Activated CD4-positive, alpha-beta T cell treated with anti-CD3 and anti-CD28 coated beads for 36 hours (primary cell): ENCODE measurements at regions of chr21 and their contacts with region 1.

Region 1: DNA sequence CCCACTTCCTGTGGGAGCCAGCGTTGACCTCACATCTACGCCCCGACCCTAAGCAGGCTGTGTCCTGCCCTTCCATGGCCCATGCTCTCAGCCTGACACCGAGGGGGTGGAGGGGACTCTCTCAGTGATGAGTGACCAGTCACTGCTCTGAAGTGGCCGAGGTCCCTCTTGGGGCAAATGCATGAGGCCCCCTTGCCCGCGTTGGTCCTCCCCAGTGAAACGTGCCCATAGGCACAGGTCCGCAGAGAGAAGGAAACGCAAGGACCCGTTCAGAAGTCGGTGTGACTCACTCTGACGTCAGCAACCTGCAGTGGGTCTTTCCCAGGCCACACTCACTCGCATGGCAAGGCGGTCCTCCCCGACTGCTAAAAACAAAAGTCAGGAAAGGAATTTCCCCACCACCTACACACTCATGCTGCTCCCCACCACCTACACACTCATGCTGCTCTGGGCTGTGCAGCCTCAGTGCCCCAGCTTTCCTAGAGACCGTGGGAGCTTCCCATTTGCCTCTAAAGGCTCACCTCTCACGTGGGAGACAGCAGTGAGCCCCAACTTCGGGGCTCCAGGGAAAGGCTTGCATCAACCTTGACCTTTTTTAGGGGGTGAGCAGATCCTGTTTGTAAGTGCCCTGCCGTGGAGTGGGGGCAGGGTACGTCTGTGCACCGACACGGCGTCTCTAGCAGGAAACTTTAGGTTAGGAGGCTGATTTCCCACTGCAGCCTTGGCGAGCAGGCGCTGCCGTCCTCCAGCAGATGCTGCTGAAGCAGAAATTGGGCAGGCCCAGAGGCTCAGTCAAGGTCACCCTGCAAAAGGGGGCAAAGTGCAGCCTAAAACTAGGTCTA is 11.4 kb downstream of the UBASH3A start:
- DNase-seq: peak; percentile 99
- ATAC-seq: peak; percentile 71
- H3K4me3 Mint-ChIP-seq: peak overlapping the region; percentile 68
- H3K27ac Mint-ChIP-seq: no peak overlapping the region
- H3K4me1 Mint-ChIP-seq: peaks cover 27% of the 10 kb centered on the region
- H3K27me3 Mint-ChIP-seq: no peaks in the 10 kb centered on the region

Region 2: GRCh38 chr21:42002421-42002958 is 412.7 kb before region 1 on chr21:
- CTCF ChIA-PET with region 1: no interaction called
- POLR2A ChIA-PET with region 1: no interaction called
- intact Hi-C with region 1: loop called (anchors 5 kb)
- DNase-seq: peak; percentile 90
- ATAC-seq: peak; percentile 92
- H3K4me3 Mint-ChIP-seq: peak overlapping the region; percentile 52
- H3K27ac Mint-ChIP-seq: peak overlapping the region; percentile 93
- H3K4me1 Mint-ChIP-seq: peaks cover 61% of the 10 kb centered on the region
- H3K27me3 Mint-ChIP-seq: no peaks in the 10 kb centered on the region

Region 3: DNA sequence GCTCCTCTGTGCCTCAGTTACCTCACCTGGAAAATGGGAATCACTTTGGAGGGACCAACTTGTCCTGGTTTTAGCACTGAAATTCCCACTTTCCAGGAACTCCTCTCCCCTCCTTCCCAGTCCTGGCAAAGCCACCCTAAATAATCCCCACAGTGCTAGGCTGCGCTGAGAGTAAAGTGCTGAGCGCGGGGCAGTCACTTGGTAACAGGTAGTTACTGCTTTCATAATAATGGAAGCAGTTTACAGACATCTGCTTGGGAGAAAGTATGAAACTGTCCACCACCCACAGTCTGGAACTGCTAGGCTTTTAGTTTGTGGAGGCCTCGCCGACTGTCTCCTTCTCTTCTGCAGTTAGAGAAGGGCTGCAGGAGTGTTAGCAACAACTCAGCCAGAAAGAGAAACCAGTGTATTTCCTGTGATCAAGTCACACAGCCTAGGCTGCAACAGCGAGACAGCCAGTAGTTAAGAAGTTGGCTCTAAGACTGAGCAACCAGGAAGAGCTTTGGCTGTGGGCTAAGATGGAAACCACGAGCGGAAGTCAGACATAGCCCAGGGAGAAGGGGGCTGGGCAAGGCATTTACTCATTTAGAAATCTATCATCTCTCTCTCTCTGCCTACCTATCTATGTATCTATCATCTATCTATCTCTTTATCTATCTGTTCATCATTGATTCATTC is 227.0 kb before region 1 on chr21:
- CTCF ChIA-PET with region 1: no interaction called
- POLR2A ChIA-PET with region 1: no interaction called
- intact Hi-C with region 1: loop called in 1 of 2 experiments (anchors 2 kb)
- DNase-seq: peak; percentile 88
- ATAC-seq: peak; percentile 93
- H3K4me3 Mint-ChIP-seq: peak overlapping the region; percentile 57
- H3K27ac Mint-ChIP-seq: peak overlapping the region; percentile 95
- H3K4me1 Mint-ChIP-seq: peaks cover 65% of the 10 kb centered on the region
- H3K27me3 Mint-ChIP-seq: peaks cover 2% of the 10 kb centered on the region

Region 4: DNA sequence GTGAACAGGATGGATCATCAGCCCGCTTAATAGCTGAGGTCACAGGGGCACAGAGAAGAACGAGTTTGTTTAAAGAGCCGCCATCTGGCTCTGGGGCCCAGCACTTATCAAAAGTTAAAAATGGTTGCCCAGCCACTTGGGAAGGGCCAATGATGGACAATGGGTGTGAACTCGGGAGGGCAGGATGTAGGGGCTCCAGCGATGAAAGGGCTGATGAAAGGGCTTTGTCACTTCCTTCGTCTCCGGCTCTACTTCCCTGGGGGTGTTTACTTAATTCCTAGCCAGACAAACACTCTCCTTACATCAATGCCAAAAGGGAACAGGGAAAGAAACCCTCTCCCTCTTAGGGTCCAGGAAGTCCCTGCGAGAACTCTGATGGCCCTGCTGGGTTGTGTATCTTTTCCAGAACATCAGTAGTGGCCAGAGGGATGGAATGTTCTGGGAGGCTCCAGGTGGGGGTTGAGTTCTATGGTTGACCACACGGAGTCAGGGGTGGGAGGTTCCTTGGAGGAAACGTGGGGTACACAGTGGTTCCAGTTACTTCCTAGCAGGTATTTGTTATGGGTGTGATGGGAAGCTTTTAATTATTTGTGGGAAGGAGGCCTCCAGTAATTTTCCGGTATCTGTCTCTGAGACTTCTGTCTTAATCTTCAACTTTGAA is 205.2 kb before region 1 on chr21:
- CTCF ChIA-PET with region 1: no interaction called
- POLR2A ChIA-PET with region 1: no interaction called
- intact Hi-C with region 1: no loop called
- DNase-seq: no peak
- ATAC-seq: no peak
- H3K4me3 Mint-ChIP-seq: no peak overlapping the region
- H3K27ac Mint-ChIP-seq: no peak overlapping the region
- H3K4me1 Mint-ChIP-seq: no peaks in the 10 kb centered on the region
- H3K27me3 Mint-ChIP-seq: no peaks in the 10 kb centered on the region

Region 5: DNA sequence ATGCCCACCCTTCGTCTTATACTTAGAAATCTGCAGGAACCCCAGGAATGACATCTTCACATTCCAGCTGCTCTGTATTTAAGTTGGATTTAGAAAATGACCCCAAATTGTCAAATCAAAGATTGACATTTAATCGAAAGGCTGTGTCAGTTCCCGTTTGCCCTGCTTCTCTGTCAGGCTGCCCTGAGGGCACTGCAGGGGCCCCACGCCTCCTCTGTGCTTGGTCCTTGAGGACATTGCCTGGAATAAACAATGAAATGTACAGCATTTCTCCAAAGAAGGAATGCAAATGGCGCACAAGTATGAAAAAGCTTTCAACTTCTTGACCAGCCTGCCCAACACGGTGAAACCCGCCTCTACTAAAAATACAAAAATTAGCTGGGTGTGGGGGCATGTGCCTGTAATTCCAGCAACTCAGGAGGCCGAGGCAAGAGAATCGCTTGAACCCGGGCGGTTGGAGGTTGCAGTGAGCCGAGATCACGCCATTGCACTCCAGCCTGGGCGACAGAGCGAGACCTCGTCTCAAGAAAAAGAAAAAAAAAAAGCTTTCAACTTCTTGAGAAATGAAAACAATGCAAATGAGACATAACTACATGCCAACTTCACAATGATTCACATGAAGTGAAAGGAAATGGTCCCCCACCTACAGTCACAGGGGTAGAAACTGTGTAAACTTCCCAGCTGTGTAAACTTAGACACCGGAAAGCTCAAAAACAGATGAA is 22.3 kb before region 1 on chr21:
- CTCF ChIA-PET with region 1: interaction called, 56 read pairs
- POLR2A ChIA-PET with region 1: interaction called, 4 read pairs
- intact Hi-C with region 1: loop called in 1 of 2 experiments (anchors 1 kb)
- DNase-seq: peak; percentile 69
- ATAC-seq: peak; percentile 94
- H3K4me3 Mint-ChIP-seq: peak overlapping the region; percentile 62
- H3K27ac Mint-ChIP-seq: peak overlapping the region; percentile 89
- H3K4me1 Mint-ChIP-seq: peaks cover 84% of the 10 kb centered on the region
- H3K27me3 Mint-ChIP-seq: no peaks in the 10 kb centered on the region

Region 6: DNA sequence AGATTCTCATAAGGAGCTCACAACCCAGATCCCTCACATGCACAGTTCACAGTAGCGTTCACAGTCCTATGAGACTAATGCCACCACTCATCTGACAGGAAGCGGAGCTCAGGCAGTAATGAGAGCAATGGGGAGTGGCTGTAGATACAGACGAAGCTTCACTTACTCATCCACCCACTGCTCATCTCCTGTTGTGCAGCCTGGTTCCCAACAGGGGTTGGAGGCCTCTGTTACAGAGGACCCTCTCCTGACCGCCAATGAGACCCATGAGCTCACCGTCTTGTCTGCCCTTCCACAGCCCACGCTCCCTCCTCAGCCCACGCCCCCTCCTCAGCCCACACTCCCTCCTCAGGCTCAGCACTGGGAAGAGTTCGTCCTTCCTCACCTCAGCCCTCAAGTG is 41.3 kb after region 1 on chr21:
- CTCF ChIA-PET with region 1: no interaction called
- POLR2A ChIA-PET with region 1: no interaction called
- intact Hi-C with region 1: loop called in 1 of 2 experiments (anchors 1 kb)
- DNase-seq: peak; percentile 76
- ATAC-seq: peak; percentile 97
- H3K4me3 Mint-ChIP-seq: no peak overlapping the region
- H3K27ac Mint-ChIP-seq: peak overlapping the region; percentile 91
- H3K4me1 Mint-ChIP-seq: peaks cover 46% of the 10 kb centered on the region
- H3K27me3 Mint-ChIP-seq: no peaks in the 10 kb centered on the region

Region 7: GRCh38 chr21:42878993-42879787 is 464.0 kb after region 1 on chr21 and contains the start of gene WDR4:
- CTCF ChIA-PET with region 1: no interaction called
- POLR2A ChIA-PET with region 1: no interaction called
- intact Hi-C with region 1: loop called in 1 of 2 experiments (anchors 5 kb)
- DNase-seq: peak; percentile 99
- ATAC-seq: peak; percentile 93
- H3K4me3 Mint-ChIP-seq: peak within 1 kb of the TSS; percentile 92
- H3K27ac Mint-ChIP-seq: peak within 1 kb of the TSS; percentile 99
- H3K4me1 Mint-ChIP-seq: peaks cover 17% of the 10 kb centered on the region
- H3K27me3 Mint-ChIP-seq: no peaks in the 10 kb centered on the region
- total RNA-seq, gene WDR4: 34.0 to 46.5 TPM